H1 (cell line): ENCODE measurements at regions of chr12 and their contacts with region 1.

Region 1: GRCh38 chr12:52879394-52880351 is 25.2 kb downstream of the KRT8 start:
- DNase-seq: peak in 1 of 2 experiments; percentile 86
- H3K4me3 ChIP-seq: peak overlapping the region in 3 of 4 experiments; percentile 29 to 59 (median 42); a peak in 6 of 8 replicates
- H3K27ac ChIP-seq: no peak overlapping the region
- H3K4me1 ChIP-seq: peaks cover 0 to 8% (median 4%) of the 10 kb centered on the region in 4 experiments; a peak in 4 of 7 replicates
- H3K27me3 ChIP-seq: peaks cover 0 to 10% (median 5%) of the 10 kb centered on the region in 4 experiments; a peak in 3 of 7 replicates
- CTCF ChIP-seq: peak; percentile 80 to 98 (median 98)
- EP300 ChIP-seq: no peak
- POLR2A ChIP-seq: no peak
- RAD21 ChIP-seq: peak; percentile 96

Region 2: DNA sequence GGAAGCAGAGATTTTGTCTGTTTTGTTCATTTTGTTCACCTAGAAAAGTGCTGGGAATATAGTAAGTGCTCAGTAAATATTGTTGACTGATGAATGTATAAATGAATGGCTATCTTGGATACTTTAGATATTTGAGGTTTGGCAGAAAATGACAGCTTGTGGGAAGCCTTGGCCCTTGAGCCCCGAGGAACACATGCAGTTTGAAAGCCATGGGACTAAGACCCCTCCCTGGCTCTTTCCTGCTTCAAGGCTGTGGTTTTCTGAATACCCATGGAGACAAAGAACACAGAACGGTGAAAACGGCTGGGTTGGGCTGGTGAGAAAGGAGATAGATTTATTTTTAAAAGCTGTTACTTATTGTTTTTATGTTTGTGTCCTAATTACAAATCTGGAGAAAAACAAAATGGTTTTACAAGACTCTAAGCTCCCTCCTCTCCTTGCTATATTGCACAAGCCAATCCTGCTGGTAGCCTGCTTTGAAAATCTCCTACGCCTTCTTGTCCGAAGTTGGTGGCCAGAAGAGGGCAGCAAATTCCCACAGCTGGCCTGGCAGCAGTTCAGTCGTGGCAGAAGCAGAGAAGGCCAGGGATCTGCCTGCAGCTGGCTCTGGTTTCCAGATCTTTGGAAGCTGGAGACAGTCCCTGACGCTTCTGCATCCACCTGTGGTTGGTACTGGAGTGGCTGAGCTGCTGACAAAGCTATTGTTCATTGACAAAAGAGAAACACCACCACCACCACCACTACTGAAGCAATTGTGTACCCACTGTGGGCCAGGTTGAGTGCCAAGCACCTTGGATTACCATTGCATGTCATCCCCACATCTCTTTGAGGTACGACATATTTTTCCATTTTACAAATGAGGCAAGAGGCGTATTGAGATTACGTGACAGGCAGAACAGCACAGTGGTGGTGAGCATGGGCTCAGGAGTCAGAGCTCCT is 507.2 kb before region 1 on chr12:
- CTCF ChIA-PET with region 1: interaction called, 81 read pairs
- POLR2A ChIA-PET with region 1: no interaction called
- DNase-seq: peak; percentile 57 to 84
- H3K4me3 ChIP-seq: no peak overlapping the region
- H3K27ac ChIP-seq: no peak overlapping the region
- H3K4me1 ChIP-seq: no peaks in the 10 kb centered on the region
- H3K27me3 ChIP-seq: no peaks in the 10 kb centered on the region
- CTCF ChIP-seq: peak; percentile 79 to 96 (median 94)
- EP300 ChIP-seq: no peak
- POLR2A ChIP-seq: no peak
- RAD21 ChIP-seq: peak; percentile 95 to 97

Region 3: DNA sequence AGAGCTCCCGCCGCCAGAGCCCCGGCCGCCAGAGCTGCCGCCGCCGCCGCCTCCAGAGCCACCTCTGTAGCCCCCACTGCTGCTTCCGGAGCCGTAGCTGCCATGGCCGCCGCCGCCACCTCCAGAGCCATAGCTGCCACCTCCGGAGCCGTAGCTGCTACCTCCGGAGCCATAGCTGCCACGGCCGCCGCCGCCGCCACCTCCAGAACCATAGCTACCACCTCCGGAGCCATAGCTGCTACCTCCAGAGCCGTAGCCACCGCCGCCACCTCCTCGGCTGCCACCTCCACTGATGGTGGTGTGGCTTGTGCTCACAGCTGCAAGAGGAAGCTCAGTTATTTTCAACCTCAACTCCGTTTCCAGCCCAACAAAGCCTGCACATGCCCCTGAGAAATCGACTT is 204.4 kb before region 1 on chr12:
- CTCF ChIA-PET with region 1: interaction called, 10 read pairs
- POLR2A ChIA-PET with region 1: no interaction called
- DNase-seq: no peak
- H3K4me3 ChIP-seq: no peak overlapping the region
- H3K27ac ChIP-seq: no peak overlapping the region
- H3K4me1 ChIP-seq: no peaks in the 10 kb centered on the region
- H3K27me3 ChIP-seq: no peaks in the 10 kb centered on the region; a peak in 1 of 7 replicates
- CTCF ChIP-seq: no peak
- EP300 ChIP-seq: no peak
- POLR2A ChIP-seq: no peak
- RAD21 ChIP-seq: no peak

Region 4: DNA sequence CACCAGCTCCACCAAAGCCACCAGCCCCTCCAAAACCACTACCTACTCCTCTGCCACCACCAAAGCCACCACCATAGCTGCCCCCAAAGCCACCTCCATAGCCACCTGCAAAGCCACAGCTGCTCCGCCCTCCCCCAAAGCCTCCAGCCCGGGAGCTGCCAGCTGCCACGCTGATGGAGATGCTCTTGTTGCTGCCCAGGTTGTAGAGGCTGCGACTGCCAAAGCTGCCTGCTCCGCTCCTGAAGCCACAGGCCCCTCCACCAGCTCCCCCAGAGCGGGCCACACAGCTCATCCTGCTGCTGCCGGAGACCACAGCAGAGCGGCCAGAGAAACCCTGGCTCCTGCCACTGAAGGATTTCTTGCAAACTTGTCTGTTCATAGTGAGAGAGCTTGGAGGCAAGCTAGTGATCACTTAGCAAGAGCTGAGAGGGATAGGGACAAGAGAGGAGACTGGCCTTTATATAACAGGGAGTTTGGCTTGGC is 102.7 kb before region 1 on chr12 and contains the start of gene KRT76:
- CTCF ChIA-PET with region 1: interaction called, 14 read pairs
- POLR2A ChIA-PET with region 1: no interaction called
- DNase-seq: no peak
- H3K4me3 ChIP-seq: no peak within 1 kb of the TSS
- H3K27ac ChIP-seq: no peak within 1 kb of the TSS
- H3K4me1 ChIP-seq: no peaks in the 10 kb centered on the region
- H3K27me3 ChIP-seq: 0 out of 7 replicates have a peak, but pooled peaks cover 0 to 2% (median 0%) of the 10 kb centered on the region in 4 experiments
- CTCF ChIP-seq: no peak
- EP300 ChIP-seq: no peak
- POLR2A ChIP-seq: no peak
- RAD21 ChIP-seq: no peak
- total RNA-seq, gene KRT76: not detected in 2 replicates

Region 5: GRCh38 chr12:52949413-52950331 is 70.0 kb after region 1 on chr12:
- CTCF ChIA-PET with region 1: interaction called, 35 read pairs
- POLR2A ChIA-PET with region 1: interaction called, 12 read pairs
- DNase-seq: peak in 1 of 2 experiments; percentile 62
- H3K4me3 ChIP-seq: peak overlapping the region; percentile 88 to 98 (median 93)
- H3K27ac ChIP-seq: peak overlapping the region; percentile 83
- H3K4me1 ChIP-seq: peaks cover 18 to 38% (median 29%) of the 10 kb centered on the region in 4 experiments
- H3K27me3 ChIP-seq: no peaks in the 10 kb centered on the region
- CTCF ChIP-seq: no peak
- EP300 ChIP-seq: no peak
- POLR2A ChIP-seq: peak; percentile 73 to 85
- RAD21 ChIP-seq: peak in 1 of 2 experiments; percentile 3; a peak in 1 of 4 replicates

Region 6: GRCh38 chr12:53098982-53099651 is 219.4 kb after region 1 on chr12:
- CTCF ChIA-PET with region 1: no interaction called
- POLR2A ChIA-PET with region 1: no interaction called
- DNase-seq: peak; percentile 65 to 97
- H3K4me3 ChIP-seq: peak overlapping the region in 2 of 4 experiments; percentile 5 to 85; a peak in 3 of 8 replicates
- H3K27ac ChIP-seq: no peak overlapping the region
- H3K4me1 ChIP-seq: peaks cover 4 to 21% (median 7%) of the 10 kb centered on the region in 4 experiments
- H3K27me3 ChIP-seq: peaks cover 0 to 25% (median 15%) of the 10 kb centered on the region in 4 experiments; a peak in 5 of 7 replicates
- CTCF ChIP-seq: peak; percentile 82 to 87 (median 86)
- EP300 ChIP-seq: no peak
- POLR2A ChIP-seq: no peak
- RAD21 ChIP-seq: peak; percentile 79 to 81